A673 (cell line): ENCODE measurements at regions of chr12 and their contacts with region 1.

Region 1: GRCh38 chr12:48881686-48882314 is 16.1 kb upstream of the RND1 start:
- DNase-seq: no peak
- H3K4me3 ChIP-seq: no peak overlapping the region
- H3K27ac ChIP-seq: no peak overlapping the region
- H3K4me1 ChIP-seq: no peaks in the 10 kb centered on the region
- H3K27me3 ChIP-seq: no peaks in the 10 kb centered on the region
- CTCF ChIP-seq: no peak

Region 2: DNA sequence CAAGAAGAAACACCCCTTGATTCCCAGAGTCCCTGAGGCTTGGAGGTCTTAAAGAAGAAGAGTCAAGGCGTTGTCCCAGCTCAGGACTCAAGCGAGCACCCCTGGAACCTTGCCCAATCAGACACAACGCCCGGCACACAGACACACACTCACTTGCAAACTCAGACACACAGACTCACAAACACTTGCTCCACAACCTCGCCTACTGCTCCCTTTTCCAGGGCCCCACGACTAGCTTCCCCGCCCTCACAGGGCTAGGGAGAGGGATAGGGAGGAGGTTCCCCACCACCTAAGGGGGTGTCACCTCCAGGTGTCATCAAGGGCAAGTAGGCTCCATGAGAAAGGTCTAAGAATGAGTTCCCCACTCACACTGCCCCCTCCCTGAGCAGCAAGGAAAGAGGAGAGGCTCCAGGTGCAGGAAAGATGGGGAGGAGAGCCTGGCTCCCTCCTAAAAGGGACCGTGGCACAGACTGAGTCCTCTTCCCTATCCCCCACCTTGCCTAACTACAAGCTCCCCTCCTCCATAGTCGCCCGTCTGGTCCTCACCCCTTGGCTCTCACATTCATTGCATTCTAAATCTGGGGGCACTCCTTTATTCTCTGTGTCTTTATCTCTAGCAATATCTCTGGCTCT is 89.0 kb after region 1 on chr12:
- CTCF ChIA-PET with region 1: interaction called, 11 read pairs
- POLR2A ChIA-PET with region 1: no interaction called
- intact Hi-C with region 1: no loop called
- DNase-seq: no peak
- H3K4me3 ChIP-seq: peak overlapping the region; percentile 46
- H3K27ac ChIP-seq: no peak overlapping the region
- H3K4me1 ChIP-seq: peaks cover 16% of the 10 kb centered on the region
- H3K27me3 ChIP-seq: peaks cover 45% of the 10 kb centered on the region
- CTCF ChIP-seq: no peak

Region 3: GRCh38 chr12:50550530-50551223 is 1668.9 kb after region 1 on chr12:
- CTCF ChIA-PET with region 1: interaction called, 12 read pairs
- POLR2A ChIA-PET with region 1: no interaction called
- intact Hi-C with region 1: no loop called
- DNase-seq: no peak
- H3K4me3 ChIP-seq: no peak overlapping the region
- H3K27ac ChIP-seq: peak overlapping the region; percentile 50
- H3K4me1 ChIP-seq: peaks cover 47% of the 10 kb centered on the region
- H3K27me3 ChIP-seq: no peaks in the 10 kb centered on the region
- CTCF ChIP-seq: no peak